ENCODE measurements at regions of chr9 and their contacts with region 1.

Region 1: DNA sequence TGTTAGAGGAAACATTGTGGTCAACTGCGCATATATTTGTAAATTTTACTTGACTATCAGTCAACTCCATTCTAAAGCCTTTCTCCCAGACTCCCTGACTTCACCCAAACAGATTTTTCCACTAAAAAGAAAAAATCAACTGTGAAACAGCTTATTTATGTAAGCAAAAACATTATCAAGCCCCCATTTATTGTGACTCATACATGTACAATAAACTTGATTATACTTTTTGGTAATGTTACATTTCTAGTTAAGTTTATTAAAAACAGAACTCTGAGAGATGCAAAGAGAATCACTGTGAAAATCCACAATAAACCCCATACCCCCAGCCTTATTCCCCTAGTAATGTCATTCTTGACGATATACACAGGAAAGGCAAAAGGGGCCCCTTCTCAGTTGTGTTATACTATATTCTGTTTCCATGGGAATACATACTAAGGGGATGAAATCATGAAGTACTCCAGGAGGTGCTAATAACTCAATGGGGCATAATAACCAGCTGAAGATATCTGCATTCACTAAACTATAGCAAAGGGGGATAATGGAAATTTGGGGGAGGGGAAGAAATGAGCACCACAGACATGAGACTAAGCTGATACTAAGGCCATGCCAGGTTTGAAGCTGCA is 616.0 kb downstream of the ACTL7B start:
- H3K4me3 Mint-ChIP-seq: no peak overlapping the region
- H3K27ac Mint-ChIP-seq: no peak overlapping the region
- H3K4me1 Mint-ChIP-seq: no peaks in the 10 kb centered on the region
- H3K27me3 Mint-ChIP-seq: no peaks in the 10 kb centered on the region

Region 2: DNA sequence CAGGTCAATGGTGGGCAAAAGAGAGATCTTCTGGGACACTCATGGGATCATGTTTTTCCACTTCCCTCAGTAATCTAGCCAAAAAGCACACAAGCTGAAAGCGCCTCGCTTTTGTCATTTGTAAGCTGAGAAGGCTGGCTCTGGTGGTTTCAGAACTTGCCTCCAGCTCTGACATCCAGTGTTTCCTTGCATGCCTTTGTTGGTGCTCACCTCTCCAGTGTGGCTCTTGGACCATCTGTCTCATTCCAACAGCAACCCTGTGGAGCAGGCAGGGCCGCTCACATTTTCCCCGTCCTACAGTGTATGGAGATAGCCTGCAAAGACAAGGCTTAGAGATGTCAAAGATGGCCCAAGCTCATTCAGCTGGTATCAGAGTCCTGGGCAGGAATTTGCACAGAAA is 589.5 kb before region 1 on chr9:
- intact Hi-C with region 1: loop called (anchors 10 kb)
- H3K4me3 Mint-ChIP-seq: no peak overlapping the region
- H3K27ac Mint-ChIP-seq: peak overlapping the region; percentile 17
- H3K4me1 Mint-ChIP-seq: peaks cover 8% of the 10 kb centered on the region
- H3K27me3 Mint-ChIP-seq: peaks cover 4% of the 10 kb centered on the region

Region 3: GRCh38 chr9:108269841-108270402 is 30.1 kb after region 1 on chr9:
- intact Hi-C with region 1: no loop called
- H3K4me3 Mint-ChIP-seq: no peak overlapping the region
- H3K27ac Mint-ChIP-seq: no peak overlapping the region
- H3K4me1 Mint-ChIP-seq: peaks cover 44% of the 10 kb centered on the region
- H3K27me3 Mint-ChIP-seq: no peaks in the 10 kb centered on the region